ENCODE measurements at regions of chr12 and their contacts with region 1.

Region 1: DNA sequence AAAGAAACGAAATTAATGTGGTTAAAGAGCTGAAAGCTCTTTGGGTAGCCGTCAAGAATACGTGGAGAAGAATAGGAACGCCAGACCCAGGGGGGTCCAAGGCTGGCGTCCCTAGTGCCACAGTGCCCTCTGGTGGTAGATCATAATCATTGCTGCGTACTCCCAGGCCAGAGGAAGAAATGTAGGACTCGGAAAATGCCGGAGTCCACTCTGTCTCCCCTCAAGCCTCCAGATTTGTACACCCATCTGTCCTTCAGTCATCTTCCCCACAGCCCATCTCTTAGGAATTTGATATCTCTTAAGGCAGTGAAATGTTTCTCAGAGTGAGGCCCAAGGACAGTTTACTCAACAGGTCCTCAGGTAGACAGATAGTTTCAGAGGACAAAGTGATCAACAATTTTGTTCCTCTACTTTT is 25.4 kb upstream of the PLEKHG6 start:
- DNase-seq: peak; percentile 91
- H3K4me3 ChIP-seq: no peak overlapping the region; a peak in 1 of 4 replicates
- H3K27ac ChIP-seq: peak overlapping the region in 1 of 2 experiments; percentile 87; a peak in 3 of 4 replicates
- H3K4me1 ChIP-seq: peaks cover 6 to 35% of the 10 kb centered on the region in 2 experiments
- H3K27me3 ChIP-seq: no peaks in the 10 kb centered on the region
- CTCF ChIP-seq: peak; percentile 91
- EP300 ChIP-seq: no peak
- RAD21 ChIP-seq: peak; percentile 99

Region 2: DNA sequence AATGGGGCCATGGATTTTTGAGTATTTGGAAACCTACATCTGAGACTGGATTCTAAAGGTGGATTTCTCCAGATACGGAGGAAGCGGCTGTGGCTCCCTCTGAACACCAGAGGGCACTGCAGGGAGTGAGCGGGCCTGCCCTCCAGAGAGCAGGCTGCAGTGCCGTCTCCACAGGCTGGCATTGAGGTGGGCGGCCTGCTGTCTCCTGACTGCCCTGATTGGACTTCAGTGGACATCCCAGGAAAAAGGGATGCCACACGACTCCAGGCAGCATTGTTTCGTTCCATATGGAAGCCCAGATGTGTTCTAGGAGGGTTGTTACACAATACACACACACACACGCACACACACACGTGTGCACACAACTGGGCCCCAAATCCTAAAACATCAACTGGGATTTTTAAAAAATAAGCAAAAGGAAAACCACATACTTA is 319.1 kb before region 1 on chr12:
- CTCF ChIA-PET with region 1: interaction called, 10 read pairs
- POLR2A ChIA-PET with region 1: interaction called, 4 read pairs
- DNase-seq: peak; percentile 80
- H3K4me3 ChIP-seq: no peak overlapping the region
- H3K27ac ChIP-seq: no peak overlapping the region
- H3K4me1 ChIP-seq: no peaks in the 10 kb centered on the region; a peak in 1 of 4 replicates
- H3K27me3 ChIP-seq: peaks cover 7% of the 10 kb centered on the region; the same call in 1 of the 2 replicates
- CTCF ChIP-seq: peak; percentile 88
- EP300 ChIP-seq: no peak
- RAD21 ChIP-seq: peak; percentile 57

Region 3: DNA sequence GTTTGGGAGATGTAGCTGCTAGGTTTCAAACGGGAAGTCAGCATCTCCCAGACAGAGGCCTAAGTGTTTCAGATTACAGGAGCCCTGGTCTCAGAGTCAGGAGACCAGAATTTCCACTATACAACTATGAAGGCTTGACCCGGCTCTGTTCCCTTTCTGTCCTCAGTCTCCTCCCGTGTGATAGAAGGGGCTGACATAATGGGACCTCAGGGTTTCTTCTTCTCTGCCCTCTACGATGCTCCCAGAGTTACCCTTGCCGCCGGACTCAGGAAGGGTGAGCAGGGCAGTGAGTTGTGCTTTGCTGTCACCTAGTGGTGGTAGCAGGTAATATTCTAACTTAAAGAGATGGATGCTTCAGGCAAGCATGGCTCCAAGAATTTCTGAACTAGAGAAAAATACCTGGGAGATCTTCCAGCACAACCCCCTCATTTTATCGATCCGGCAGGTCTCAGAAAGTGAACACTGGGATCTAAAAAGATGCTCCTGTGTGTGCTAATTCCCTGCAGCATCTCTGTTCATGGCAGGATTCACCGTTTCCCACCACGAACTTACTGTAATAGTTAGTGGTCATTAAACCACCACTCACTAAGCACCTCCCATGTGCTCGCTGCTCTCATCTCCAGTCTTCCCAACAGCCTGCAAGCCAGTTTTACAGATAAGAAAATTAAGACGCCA is 245.0 kb before region 1 on chr12:
- CTCF ChIA-PET with region 1: interaction called, 17 read pairs
- POLR2A ChIA-PET with region 1: no interaction called
- DNase-seq: peak; percentile 83
- H3K4me3 ChIP-seq: no peak overlapping the region; a peak in 1 of 4 replicates
- H3K27ac ChIP-seq: no peak overlapping the region; a peak in 1 of 4 replicates
- H3K4me1 ChIP-seq: peaks cover 0 to 12% of the 10 kb centered on the region in 2 experiments; a peak in 1 of 4 replicates
- H3K27me3 ChIP-seq: no peaks in the 10 kb centered on the region
- CTCF ChIP-seq: peak; percentile 90
- EP300 ChIP-seq: no peak
- RAD21 ChIP-seq: peak; percentile 98

Region 4: DNA sequence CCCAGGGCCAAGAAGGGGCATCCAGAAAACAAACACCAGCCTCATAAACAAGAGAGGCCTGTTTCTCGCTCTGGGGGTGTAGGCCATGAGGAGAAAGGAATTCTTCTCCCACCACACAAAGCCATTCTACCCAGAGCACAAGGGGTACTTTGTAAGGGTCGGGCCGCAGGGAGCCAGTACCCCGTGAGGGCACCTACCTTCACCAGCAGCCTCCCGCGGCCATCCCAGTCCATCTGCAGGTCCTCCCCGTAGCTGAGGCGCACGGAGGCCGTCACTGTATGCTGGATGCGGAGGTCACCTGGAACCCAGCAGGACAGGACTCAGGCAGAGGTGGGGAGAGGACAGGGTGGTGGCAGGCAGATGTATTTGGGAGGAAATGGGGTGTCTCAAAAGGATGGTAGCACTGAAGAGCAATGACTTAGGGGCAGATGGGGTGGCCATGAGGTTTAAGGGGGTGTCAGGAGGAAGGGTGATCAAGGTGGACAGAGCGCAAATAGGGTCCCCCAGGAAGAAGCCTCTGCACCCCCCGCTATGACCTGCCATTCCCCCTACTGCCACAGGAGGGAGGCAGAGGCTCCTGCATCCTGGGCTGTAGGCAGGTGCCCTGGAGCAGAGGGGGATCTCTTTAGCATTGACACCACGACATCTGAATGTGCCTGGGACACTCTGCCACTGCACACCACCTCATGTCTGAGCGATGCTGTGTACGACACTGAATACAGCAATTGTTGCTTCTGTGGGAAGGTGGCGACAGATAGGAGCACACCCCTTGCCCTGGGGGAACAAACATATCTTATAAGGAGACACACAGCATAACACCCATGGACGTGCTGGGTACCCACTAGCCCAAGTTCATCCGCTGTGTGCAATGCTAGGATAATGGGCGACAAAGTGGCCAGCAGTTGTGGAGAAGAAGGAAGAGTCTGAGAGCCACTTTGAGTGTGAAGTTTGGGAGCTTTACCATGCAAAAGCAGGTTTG is 222.0 kb before region 1 on chr12:
- CTCF ChIA-PET with region 1: interaction called, 121 read pairs
- POLR2A ChIA-PET with region 1: no interaction called
- DNase-seq: peak; percentile 91
- H3K4me3 ChIP-seq: peak overlapping the region in 1 of 2 experiments; percentile 26; a peak in 1 of 4 replicates
- H3K27ac ChIP-seq: peak overlapping the region in 1 of 2 experiments; percentile 69; a peak in 1 of 4 replicates
- H3K4me1 ChIP-seq: peaks cover 0 to 64% of the 10 kb centered on the region in 2 experiments; a peak in 1 of 4 replicates
- H3K27me3 ChIP-seq: no peaks in the 10 kb centered on the region
- CTCF ChIP-seq: peak; percentile 93
- EP300 ChIP-seq: no peak
- RAD21 ChIP-seq: peak; percentile 95

Region 5: DNA sequence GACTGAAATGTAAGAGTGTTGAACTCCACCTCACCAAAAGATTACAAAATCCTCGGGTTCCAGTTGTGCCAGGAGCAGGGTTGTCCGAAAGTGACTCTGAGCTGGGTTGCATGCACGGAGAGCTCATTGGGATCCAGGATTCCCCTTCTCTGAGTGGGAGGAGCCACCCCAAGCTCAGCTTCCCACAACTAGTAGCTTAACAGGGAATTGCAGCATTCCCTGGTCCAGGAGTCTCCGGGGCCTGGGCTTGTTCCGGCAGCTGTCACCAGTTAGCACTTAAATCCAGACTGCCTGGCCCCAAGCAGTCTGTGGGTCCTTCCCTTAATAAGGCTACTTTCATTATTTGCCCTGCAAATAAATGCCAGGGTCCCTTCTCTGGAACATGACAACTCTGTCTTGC is 34.7 kb before region 1 on chr12:
- CTCF ChIA-PET with region 1: interaction called, 19 read pairs
- POLR2A ChIA-PET with region 1: no interaction called
- DNase-seq: peak; percentile 63
- H3K4me3 ChIP-seq: no peak overlapping the region
- H3K27ac ChIP-seq: peak overlapping the region in 1 of 2 experiments; percentile 92; a peak in 2 of 4 replicates
- H3K4me1 ChIP-seq: peaks cover 0 to 35% of the 10 kb centered on the region in 2 experiments; a peak in 2 of 4 replicates
- H3K27me3 ChIP-seq: no peaks in the 10 kb centered on the region
- CTCF ChIP-seq: no peak
- EP300 ChIP-seq: peak in 1 of 2 experiments; percentile 65; a peak in 1 of 4 replicates
- RAD21 ChIP-seq: 0 out of 2 replicates have a peak, but pooled peaks have one; percentile 14

Region 6: GRCh38 chr12:6423267-6424007 is 138.4 kb after region 1 on chr12:
- CTCF ChIA-PET with region 1: no interaction called
- POLR2A ChIA-PET with region 1: no interaction called
- DNase-seq: peak; percentile 83
- H3K4me3 ChIP-seq: no peak overlapping the region
- H3K27ac ChIP-seq: no peak overlapping the region
- H3K4me1 ChIP-seq: no peaks in the 10 kb centered on the region
- H3K27me3 ChIP-seq: no peaks in the 10 kb centered on the region
- CTCF ChIP-seq: peak; percentile 84
- EP300 ChIP-seq: no peak
- RAD21 ChIP-seq: peak; percentile 94

Region 7: GRCh38 chr12:6582196-6582595 is 297.1 kb after region 1 on chr12:
- CTCF ChIA-PET with region 1: no interaction called
- POLR2A ChIA-PET with region 1: no interaction called
- DNase-seq: peak; percentile 39
- H3K4me3 ChIP-seq: no peak overlapping the region
- H3K27ac ChIP-seq: no peak overlapping the region
- H3K4me1 ChIP-seq: no peaks in the 10 kb centered on the region
- H3K27me3 ChIP-seq: no peaks in the 10 kb centered on the region
- CTCF ChIP-seq: peak; percentile 33
- EP300 ChIP-seq: no peak
- RAD21 ChIP-seq: no peak

Measured in SK-N-SH (cell line).